ENCODE measurements at regions of chr3 and their contacts with region 1.

Region 1: GRCh38 chr3:146326670-146327543 is 76.0 kb upstream of the PLSCR4 start:
- DNase-seq: peak; percentile 82
- ATAC-seq: peak; percentile 93
- H3K4me3 ChIP-seq: no peak overlapping the region
- H3K27ac ChIP-seq: no peak overlapping the region
- H3K4me1 ChIP-seq: no peaks in the 10 kb centered on the region
- H3K27me3 ChIP-seq: no peaks in the 10 kb centered on the region
- CTCF ChIP-seq: peak; percentile 82
- POLR2A ChIP-seq: no peak
- RAD21 ChIP-seq: peak; percentile 84

Region 2: GRCh38 chr3:146189519-146190173 is 137.3 kb before region 1 on chr3:
- CTCF ChIA-PET with region 1: interaction called, 59 read pairs
- POLR2A ChIA-PET with region 1: no interaction called
- dilution Hi-C with region 1: no loop called
- in situ Hi-C with region 1: no loop called
- intact Hi-C with region 1: loop called (anchors 1 kb)
- DNase-seq: peak; percentile 64
- ATAC-seq: peak; percentile 95
- H3K4me3 ChIP-seq: no peak overlapping the region
- H3K27ac ChIP-seq: no peak overlapping the region
- H3K4me1 ChIP-seq: no peaks in the 10 kb centered on the region
- H3K27me3 ChIP-seq: no peaks in the 10 kb centered on the region
- CTCF ChIP-seq: peak; percentile 79
- POLR2A ChIP-seq: no peak
- RAD21 ChIP-seq: peak; percentile 83

Region 3: GRCh38 chr3:146342989-146343388 is 16.1 kb after region 1 on chr3:
- CTCF ChIA-PET with region 1: no interaction called
- POLR2A ChIA-PET with region 1: no interaction called
- dilution Hi-C with region 1: no loop called
- in situ Hi-C with region 1: no loop called
- intact Hi-C with region 1: no loop called
- DNase-seq: peak; percentile 54
- ATAC-seq: no peak
- H3K4me3 ChIP-seq: no peak overlapping the region
- H3K27ac ChIP-seq: no peak overlapping the region
- H3K4me1 ChIP-seq: no peaks in the 10 kb centered on the region
- H3K27me3 ChIP-seq: no peaks in the 10 kb centered on the region
- CTCF ChIP-seq: no peak
- POLR2A ChIP-seq: no peak
- RAD21 ChIP-seq: no peak